Caco-2 (cell line): ENCODE measurements at regions of chr13 and their contacts with region 1.

Region 1: GRCh38 chr13:26985285-26985878 is 186.2 kb downstream of the USP12 start:
- DNase-seq: peak; percentile 80 to 83
- H3K4me3 ChIP-seq: no peak overlapping the region
- H3K4me3 Mint-ChIP-seq: no peak overlapping the region
- H3K27ac Mint-ChIP-seq: peak overlapping the region; percentile 30
- H3K4me1 ChIP-seq: peaks cover 49% of the 10 kb centered on the region
- H3K4me1 Mint-ChIP-seq: peaks cover 62% of the 10 kb centered on the region
- H3K27me3 ChIP-seq: no peaks in the 10 kb centered on the region
- H3K27me3 Mint-ChIP-seq: no peaks in the 10 kb centered on the region
- CTCF ChIP-seq: peak; percentile 65 to 92

Region 2: DNA sequence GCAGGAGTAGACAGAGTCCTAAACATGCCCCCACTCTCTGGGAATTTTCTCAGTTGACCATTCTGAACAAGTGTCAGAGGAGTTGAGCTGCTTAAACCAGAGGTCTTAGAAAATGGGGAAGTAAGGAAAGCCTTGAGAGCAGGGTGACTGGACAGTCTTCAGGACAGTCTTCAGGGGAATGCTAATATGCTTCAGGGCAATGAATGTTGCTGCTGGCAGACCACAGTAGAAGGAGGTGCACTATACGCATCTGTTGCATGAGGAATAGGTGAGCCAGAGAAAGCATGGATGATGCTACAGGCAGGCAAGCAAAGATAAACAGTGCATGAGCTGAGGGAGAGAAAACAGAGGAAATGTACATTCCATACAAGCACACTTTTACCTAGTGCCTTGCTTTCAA is 28.2 kb before region 1 on chr13:
- CTCF ChIA-PET with region 1: interaction called, 59 read pairs
- POLR2A ChIA-PET with region 1: interaction called, 27 read pairs
- intact Hi-C with region 1: loop called (anchors 1 kb)
- DNase-seq: peak; percentile 72 to 76
- H3K4me3 ChIP-seq: no peak overlapping the region
- H3K4me3 Mint-ChIP-seq: peak overlapping the region; percentile 38
- H3K27ac Mint-ChIP-seq: peak overlapping the region; percentile 90
- H3K4me1 ChIP-seq: peaks cover 91% of the 10 kb centered on the region
- H3K4me1 Mint-ChIP-seq: peaks cover 56% of the 10 kb centered on the region
- H3K27me3 ChIP-seq: no peaks in the 10 kb centered on the region
- H3K27me3 Mint-ChIP-seq: no peaks in the 10 kb centered on the region
- CTCF ChIP-seq: no peak

Region 3: DNA sequence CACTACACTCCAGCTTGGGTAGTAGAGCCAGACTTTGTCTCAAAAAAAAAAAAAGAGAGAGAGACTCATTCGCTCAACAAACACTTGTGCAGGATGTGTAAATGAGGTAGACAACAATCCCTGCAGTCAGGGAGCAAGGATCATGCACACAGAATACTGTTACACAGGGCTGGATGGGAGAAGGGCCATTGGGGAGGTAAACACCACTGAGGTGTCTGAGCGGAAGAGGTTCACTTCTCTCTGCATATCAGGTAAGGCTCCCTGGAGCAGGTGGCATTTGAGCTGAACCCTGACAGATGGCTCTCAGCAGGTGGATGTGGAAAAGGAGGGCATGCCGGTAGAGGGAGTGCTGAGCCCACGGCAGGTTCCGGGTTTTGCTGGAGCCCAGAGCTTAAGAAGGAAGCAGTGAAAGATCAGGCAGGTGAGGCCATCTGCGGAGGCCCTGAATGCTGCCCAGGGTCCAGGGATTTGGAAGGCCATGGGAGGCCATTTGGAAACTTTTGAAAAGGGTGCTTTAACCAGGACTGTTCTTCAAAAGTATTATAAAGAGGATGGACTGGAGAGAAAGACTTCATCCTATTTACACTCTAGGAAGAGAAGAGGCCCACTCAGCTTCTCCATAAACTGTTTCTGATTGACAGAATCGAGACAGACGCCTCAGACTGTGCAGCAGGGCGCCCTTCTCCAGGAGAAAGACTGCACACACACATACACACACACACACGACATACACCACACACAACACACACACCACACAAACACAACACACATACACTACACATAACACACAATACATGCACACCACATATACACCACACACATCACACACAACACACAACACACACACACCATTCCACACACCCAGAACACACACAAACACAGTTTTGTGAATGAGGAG is 13.1 kb before region 1 on chr13:
- CTCF ChIA-PET with region 1: interaction called, 30 read pairs
- POLR2A ChIA-PET with region 1: interaction called, 12 read pairs
- intact Hi-C with region 1: loop called (anchors 1 kb)
- DNase-seq: peak; percentile 76 to 81
- H3K4me3 ChIP-seq: no peak overlapping the region
- H3K4me3 Mint-ChIP-seq: peak overlapping the region; percentile 5
- H3K27ac Mint-ChIP-seq: peak overlapping the region; percentile 60
- H3K4me1 ChIP-seq: peaks cover 79% of the 10 kb centered on the region
- H3K4me1 Mint-ChIP-seq: peaks cover 72% of the 10 kb centered on the region
- H3K27me3 ChIP-seq: no peaks in the 10 kb centered on the region
- H3K27me3 Mint-ChIP-seq: no peaks in the 10 kb centered on the region
- CTCF ChIP-seq: peak; percentile 45 to 79

Region 4: DNA sequence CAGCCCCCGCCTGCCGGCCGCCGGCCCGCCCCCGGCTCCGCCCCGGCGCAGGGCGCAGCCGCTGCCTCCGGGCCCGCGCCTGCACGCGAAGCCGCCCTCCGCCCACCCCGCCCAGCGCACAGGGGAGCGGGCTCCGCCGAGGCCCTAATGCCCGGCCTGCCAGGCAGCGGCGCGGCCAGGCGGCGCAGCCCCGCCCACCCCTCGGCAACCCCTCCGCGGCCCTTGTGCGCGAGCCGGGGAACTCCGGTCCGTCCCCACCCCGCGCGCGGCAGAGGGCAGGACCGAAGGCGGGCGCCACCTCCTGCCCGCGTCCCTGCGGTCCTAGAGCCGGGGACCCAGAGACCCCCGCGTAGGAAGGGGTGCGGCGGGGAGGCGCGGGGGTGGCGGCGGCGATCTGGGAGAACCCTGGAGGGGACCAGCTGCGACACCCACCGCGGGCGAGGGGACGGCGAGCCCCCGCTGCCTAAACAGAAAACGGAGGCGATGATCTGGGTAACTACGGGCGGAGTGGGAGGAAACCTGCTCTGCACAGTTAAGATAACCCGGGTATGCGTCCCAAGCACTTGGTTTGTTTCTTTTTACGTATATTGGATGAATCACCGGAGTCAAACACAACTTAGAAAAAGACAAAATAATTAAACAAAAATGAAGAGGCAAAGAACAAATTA is 186.6 kb after region 1 on chr13:
- CTCF ChIA-PET with region 1: interaction called, 4 read pairs
- POLR2A ChIA-PET with region 1: no interaction called
- intact Hi-C with region 1: loop called (anchors 2 kb)
- DNase-seq: peak; percentile 93 to 95
- H3K4me3 ChIP-seq: peak overlapping the region; percentile 85
- H3K4me3 Mint-ChIP-seq: peak overlapping the region; percentile 95
- H3K27ac Mint-ChIP-seq: no peak overlapping the region
- H3K4me1 ChIP-seq: peaks cover 19% of the 10 kb centered on the region
- H3K4me1 Mint-ChIP-seq: peaks cover 27% of the 10 kb centered on the region
- H3K27me3 ChIP-seq: no peaks in the 10 kb centered on the region
- H3K27me3 Mint-ChIP-seq: no peaks in the 10 kb centered on the region
- CTCF ChIP-seq: no peak

Region 5: GRCh38 chr13:27270594-27271520 is 285.5 kb after region 1 on chr13 and contains the start of gene RASL11A:
- CTCF ChIA-PET with region 1: interaction called, 5 read pairs
- POLR2A ChIA-PET with region 1: no interaction called
- intact Hi-C with region 1: loop called (anchors 5 kb)
- DNase-seq: peak; percentile 87 to 91
- H3K4me3 ChIP-seq: peak within 1 kb of the TSS; percentile 82
- H3K4me3 Mint-ChIP-seq: peak within 1 kb of the TSS; percentile 81
- H3K27ac Mint-ChIP-seq: peak within 1 kb of the TSS; percentile 74
- H3K4me1 ChIP-seq: peaks cover 4% of the 10 kb centered on the region; the same call in 1 of the 2 replicates
- H3K4me1 Mint-ChIP-seq: peaks cover 7% of the 10 kb centered on the region
- H3K27me3 ChIP-seq: no peaks in the 10 kb centered on the region
- H3K27me3 Mint-ChIP-seq: no peaks in the 10 kb centered on the region
- CTCF ChIP-seq: peak; percentile 79 to 97
- total RNA-seq, gene RASL11A: 18.8 and 21.0 TPM in 2 replicates